ENCODE measurements at regions of chr2 and their contacts with region 1.

Region 1: DNA sequence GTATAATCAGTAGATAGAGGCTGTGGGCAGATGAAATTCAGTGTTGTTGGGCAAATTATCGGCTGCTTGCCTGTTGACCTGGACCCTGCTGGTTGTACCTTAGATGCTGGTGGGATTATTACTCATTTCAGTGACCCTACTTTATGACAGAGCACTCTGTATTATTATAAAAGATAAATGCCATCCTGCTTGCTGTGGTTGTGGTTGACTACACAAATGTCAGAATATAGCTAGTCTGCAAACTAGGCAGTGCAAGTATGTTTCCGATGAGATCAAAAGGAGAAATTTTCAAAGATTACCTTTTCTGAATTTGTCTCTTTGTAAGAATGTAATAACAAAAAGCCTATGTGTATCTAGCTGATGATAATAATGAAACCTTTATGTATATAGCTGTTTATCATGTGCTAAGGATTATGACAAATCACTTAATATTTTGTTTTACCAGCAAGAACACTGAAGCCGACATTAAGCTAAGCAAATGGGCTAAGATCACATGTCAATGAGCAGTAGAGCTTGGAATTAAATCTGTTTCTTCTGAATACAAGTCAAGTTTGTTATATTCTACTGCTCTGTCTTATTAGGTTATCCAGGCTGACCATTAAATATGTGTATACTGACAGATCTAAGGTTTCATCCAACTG is 219.2 kb downstream of the CAMKMT start:
- DNase-seq: peak in 1 of 9 donors; percentile 3
- ATAC-seq: no peak
- H3K4me3 ChIP-seq: no peak overlapping the region
- H3K4me3 Mint-ChIP-seq: peak overlapping the region in 3 of 10 donors; percentile 1 to 20 (median 8)
- H3K27ac ChIP-seq: no peak overlapping the region
- H3K27ac Mint-ChIP-seq: peak overlapping the region in 1 of 9 donors; percentile 7
- H3K4me1 ChIP-seq: peaks cover 0 to 11% of the 10 kb centered on the region in 2 donors
- H3K4me1 Mint-ChIP-seq: peaks cover 14 to 59% (median 47%) of the 10 kb centered on the region in 7 donors
- H3K27me3 ChIP-seq: no peaks in the 10 kb centered on the region
- H3K27me3 Mint-ChIP-seq: no peaks in the 10 kb centered on the region

Region 2: GRCh38 chr2:44201648-44202165 is 379.3 kb before region 1 on chr2:
- CTCF ChIA-PET with region 1: no interaction called
- POLR2A ChIA-PET with region 1: no interaction called
- intact Hi-C with region 1: no loop called
- DNase-seq: no peak
- ATAC-seq: no peak
- H3K4me3 ChIP-seq: no peak overlapping the region
- H3K4me3 Mint-ChIP-seq: peak overlapping the region in 6 of 10 donors; percentile 2 to 61 (median 20)
- H3K27ac ChIP-seq: no peak overlapping the region
- H3K27ac Mint-ChIP-seq: peak overlapping the region in 5 of 9 donors; percentile 6 to 76 (median 29)
- H3K4me1 ChIP-seq: peaks cover 0 to 20% of the 10 kb centered on the region in 2 donors
- H3K4me1 Mint-ChIP-seq: peaks cover 28 to 84% (median 76%) of the 10 kb centered on the region in 7 donors
- H3K27me3 ChIP-seq: no peaks in the 10 kb centered on the region
- H3K27me3 Mint-ChIP-seq: no peaks in the 10 kb centered on the region

Region 3: GRCh38 chr2:44602446-44602845 is 21.5 kb after region 1 on chr2:
- CTCF ChIA-PET with region 1: no interaction called
- POLR2A ChIA-PET with region 1: no interaction called
- intact Hi-C with region 1: loop called in 1 of 2 experiments (anchors 1 kb)
- DNase-seq: no peak
- ATAC-seq: no peak
- H3K4me3 ChIP-seq: no peak overlapping the region
- H3K4me3 Mint-ChIP-seq: no peak overlapping the region
- H3K27ac ChIP-seq: no peak overlapping the region
- H3K27ac Mint-ChIP-seq: peak overlapping the region in 1 of 9 donors; percentile 59
- H3K4me1 ChIP-seq: no peaks in the 10 kb centered on the region
- H3K4me1 Mint-ChIP-seq: no peaks in the 10 kb centered on the region
- H3K27me3 ChIP-seq: no peaks in the 10 kb centered on the region
- H3K27me3 Mint-ChIP-seq: no peaks in the 10 kb centered on the region

Measured in naive thymus-derived CD4-positive, alpha-beta T cell (primary cell).